Common myeloid progenitor, CD34-positive (primary cell): ENCODE measurements at regions of chr17 and their contacts with region 1.

Region 1: GRCh38 chr17:5500589-5501391 is 14.4 kb downstream of the MIS12 start:
- DNase-seq: peak; percentile 86 to 94 (median 92)
- H3K4me3 ChIP-seq: peak overlapping the region; percentile 30 to 88 (median 61)
- H3K27ac ChIP-seq: peak overlapping the region in 1 of 2 experiments; percentile 43
- H3K4me1 ChIP-seq: peaks cover 0 to 17% (median 14%) of the 10 kb centered on the region in 4 experiments
- H3K27me3 ChIP-seq: peaks cover 0 to 11% (median 0%) of the 10 kb centered on the region in 5 experiments

Region 2: DNA sequence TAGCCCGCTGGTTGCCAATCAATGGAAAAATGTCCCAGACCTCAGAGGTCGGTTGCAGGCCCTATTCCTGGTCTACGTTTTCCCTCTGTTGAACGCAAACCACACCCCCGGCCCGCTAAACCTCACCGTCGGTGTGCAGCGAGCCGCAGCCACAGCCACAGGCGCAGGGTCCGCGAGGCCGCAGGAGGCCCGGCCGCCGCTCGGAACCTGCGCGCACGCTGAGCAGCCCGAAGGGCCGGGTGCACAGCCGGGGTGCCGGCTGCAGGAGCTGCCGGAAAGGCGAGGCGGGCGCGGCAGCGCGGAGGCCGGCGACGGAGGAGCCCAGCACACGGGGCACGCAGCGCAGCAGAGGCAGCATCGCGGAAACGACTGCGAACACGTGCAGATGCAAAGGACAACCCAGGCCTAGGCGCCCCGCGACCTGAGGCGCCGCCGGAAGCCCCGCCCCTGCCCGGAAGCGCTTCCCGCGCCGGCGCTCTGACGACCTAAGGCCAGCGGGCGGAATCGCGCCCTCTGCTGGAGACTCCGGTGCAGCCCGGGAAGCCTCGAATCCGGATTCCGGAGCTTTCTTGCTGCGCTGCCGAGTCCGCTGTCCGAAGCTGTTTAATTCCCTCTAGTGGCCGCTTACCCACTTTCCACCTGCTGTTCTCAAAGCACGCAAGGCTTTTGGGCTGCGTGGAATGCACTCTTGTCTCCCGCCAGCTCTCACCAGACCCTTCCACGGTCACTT is 61.9 kb before region 1 on chr17 and contains the start of gene C1QBP:
- CTCF ChIA-PET with region 1: no interaction called
- POLR2A ChIA-PET with region 1: no interaction called
- DNase-seq: peak; percentile 94 to 97 (median 96)
- H3K4me3 ChIP-seq: peak within 1 kb of the TSS; percentile 68 to 100 (median 92)
- H3K27ac ChIP-seq: peak within 1 kb of the TSS; percentile 75 to 85
- H3K4me1 ChIP-seq: peaks cover 17 to 35% (median 25%) of the 10 kb centered on the region in 4 experiments
- H3K27me3 ChIP-seq: no peaks in the 10 kb centered on the region

Region 3: DNA sequence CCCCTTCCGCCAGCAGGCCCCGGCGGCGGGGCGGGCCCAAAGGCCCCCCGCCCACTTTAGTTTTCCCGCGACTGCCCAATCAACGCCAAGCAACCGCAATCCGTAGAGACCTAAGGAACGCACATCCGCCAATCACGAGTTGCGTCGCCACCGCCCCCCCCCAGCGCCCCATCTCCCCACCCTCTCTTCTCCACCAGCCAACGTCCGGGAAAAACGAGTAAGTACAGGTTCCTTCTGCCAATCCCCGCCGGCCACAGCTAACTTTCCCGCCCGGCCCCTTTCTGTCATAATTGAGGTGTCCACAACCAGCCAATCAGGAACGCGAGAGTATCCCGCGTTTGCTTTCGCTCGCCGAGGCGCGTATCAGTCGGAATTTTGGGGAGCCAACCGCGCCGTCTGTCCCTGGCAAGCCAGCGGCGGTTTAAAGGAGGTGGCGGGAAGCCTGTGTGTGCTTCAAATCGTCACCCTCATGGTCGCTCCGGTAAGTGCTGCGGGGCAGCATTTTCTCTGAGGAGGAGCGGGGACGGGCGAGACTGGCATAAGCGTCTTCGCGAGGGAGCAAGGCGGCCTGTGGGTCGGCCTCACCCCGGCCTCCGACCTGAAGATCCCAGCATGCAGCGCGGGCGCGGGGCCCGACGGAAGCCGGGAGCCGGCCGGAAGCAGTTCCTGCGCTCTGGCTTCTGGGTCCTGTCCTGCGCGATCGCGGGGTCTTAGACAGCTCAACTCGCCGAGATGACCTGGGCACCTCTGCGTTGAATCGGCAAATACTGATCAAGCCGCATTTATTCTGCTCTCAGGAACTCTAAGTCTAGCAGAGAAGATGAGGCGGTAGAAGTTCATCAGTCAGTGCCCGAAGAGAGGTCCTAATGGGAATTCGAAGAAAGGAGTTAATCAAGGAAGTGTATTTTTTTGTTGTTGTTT is 14.3 kb before region 1 on chr17 and contains the start of gene MIS12:
- CTCF ChIA-PET with region 1: interaction called, 5 read pairs
- POLR2A ChIA-PET with region 1: interaction called, 17 read pairs
- DNase-seq: peak; percentile 99 to 100 (median 100)
- H3K4me3 ChIP-seq: peak within 1 kb of the TSS; percentile 58 to 99 (median 97)
- H3K27ac ChIP-seq: peak within 1 kb of the TSS; percentile 97 to 98
- H3K4me1 ChIP-seq: peaks cover 10 to 29% (median 20%) of the 10 kb centered on the region in 4 experiments
- H3K27me3 ChIP-seq: no peaks in the 10 kb centered on the region